IMR-90 (cell line): ENCODE measurements at regions of chr12 and their contacts with region 1.

Region 1: DNA sequence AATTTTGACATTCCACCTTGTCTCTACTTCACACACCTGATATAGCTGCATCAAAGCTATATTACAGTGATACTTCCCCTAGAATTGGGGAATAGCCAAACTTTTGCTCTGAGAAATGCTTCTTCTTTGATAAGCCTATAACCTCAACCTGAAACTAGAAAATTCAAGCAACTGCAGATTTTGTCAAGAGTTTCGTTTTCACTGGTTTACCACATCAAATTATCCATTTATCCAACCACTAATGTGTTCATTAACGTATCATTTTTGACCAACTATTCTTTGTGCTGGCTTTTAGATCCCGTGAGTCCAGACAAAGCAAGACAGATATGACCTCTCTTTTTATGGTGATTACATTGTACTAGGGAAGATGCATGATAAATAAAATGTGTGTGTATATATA is 13.5 kb upstream of the TAS2R46 start:
- DNase-seq: no peak
- ATAC-seq: no peak
- H3K4me3 ChIP-seq: no peak overlapping the region
- H3K27ac ChIP-seq: no peak overlapping the region
- H3K4me1 ChIP-seq: no peaks in the 10 kb centered on the region
- H3K27me3 ChIP-seq: no peaks in the 10 kb centered on the region
- CTCF ChIP-seq: no peak
- POLR2A ChIP-seq: no peak
- RAD21 ChIP-seq: no peak

Region 2: GRCh38 chr12:11015775-11016430 is 59.7 kb before region 1 on chr12:
- CTCF ChIA-PET with region 1: no interaction called
- POLR2A ChIA-PET with region 1: no interaction called
- dilution Hi-C with region 1: no loop called
- in situ Hi-C with region 1: no loop called
- intact Hi-C with region 1: loop called (anchors 1 kb)
- DNase-seq: no peak
- ATAC-seq: no peak
- H3K4me3 ChIP-seq: no peak overlapping the region
- H3K27ac ChIP-seq: no peak overlapping the region
- H3K4me1 ChIP-seq: no peaks in the 10 kb centered on the region; the same call in 1 of the 2 replicates
- H3K27me3 ChIP-seq: no peaks in the 10 kb centered on the region
- CTCF ChIP-seq: no peak
- POLR2A ChIP-seq: no peak
- RAD21 ChIP-seq: no peak

Region 3: DNA sequence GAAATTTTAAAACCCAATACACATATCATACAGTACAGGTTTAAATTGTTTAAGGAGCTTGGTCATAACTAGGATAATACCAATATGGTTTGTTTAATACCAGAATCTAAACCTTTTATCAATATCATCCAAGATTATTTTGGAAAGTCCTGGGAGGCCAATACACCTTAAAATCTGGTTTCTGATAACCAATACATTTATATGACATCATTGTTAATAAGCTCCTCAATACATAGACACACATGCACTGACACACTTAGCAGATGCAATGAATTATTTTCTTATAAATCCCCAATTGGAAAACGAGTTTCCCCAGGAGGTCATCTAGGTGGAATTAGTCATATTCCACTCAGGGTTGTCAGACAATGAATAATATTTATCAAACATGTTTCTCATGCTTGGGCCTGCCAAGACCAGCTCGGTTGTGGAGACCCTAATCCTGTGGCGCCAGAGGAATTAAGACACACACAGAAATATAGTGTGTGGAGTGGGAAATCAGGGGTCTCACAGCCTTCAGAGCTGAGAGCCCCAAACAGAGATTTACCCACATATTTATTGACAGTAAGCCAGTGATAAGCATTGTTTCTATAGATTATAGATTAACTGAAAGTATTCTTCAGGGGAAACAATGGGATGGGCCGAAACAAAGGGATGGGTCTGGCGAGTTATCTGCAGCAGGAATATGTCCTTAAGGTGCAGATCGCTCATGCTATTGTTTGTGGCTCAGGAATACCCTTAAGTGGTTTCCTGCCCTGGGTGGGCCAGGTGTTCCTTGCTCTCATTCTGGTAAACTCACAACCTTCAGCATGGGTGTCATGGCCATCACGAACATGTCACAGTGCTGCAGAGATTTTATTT is 25.7 kb before region 1 on chr12:
- CTCF ChIA-PET with region 1: no interaction called
- POLR2A ChIA-PET with region 1: no interaction called
- dilution Hi-C with region 1: no loop called
- in situ Hi-C with region 1: no loop called
- intact Hi-C with region 1: no loop called
- DNase-seq: no peak
- ATAC-seq: no peak
- H3K4me3 ChIP-seq: no peak overlapping the region
- H3K27ac ChIP-seq: no peak overlapping the region
- H3K4me1 ChIP-seq: no peaks in the 10 kb centered on the region
- H3K27me3 ChIP-seq: no peaks in the 10 kb centered on the region
- CTCF ChIP-seq: no peak
- POLR2A ChIP-seq: no peak
- RAD21 ChIP-seq: no peak

Region 4: DNA sequence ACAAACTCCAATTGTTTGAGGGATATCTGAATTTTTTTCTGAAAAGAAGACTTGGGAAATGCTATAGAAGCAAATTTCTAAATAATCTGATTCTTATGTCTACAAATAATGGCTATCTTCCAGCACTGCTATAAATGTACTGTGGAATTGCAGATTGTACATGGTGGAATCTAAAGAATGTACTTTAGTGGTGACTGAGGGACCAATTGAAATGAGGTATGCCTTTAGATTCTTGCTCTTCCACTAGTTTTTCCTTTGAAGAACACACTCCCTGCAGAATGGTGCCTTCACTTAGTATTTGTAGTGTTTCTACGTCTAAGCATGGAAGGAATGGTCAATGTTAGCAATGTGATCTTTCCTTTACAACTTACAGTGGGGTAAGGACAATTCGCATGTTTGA is 246.3 kb after region 1 on chr12:
- CTCF ChIA-PET with region 1: no interaction called
- POLR2A ChIA-PET with region 1: no interaction called
- dilution Hi-C with region 1: no loop called
- in situ Hi-C with region 1: no loop called
- intact Hi-C with region 1: no loop called
- DNase-seq: no peak
- ATAC-seq: no peak; the same call in 1 of the 2 replicates
- H3K4me3 ChIP-seq: no peak overlapping the region
- H3K27ac ChIP-seq: no peak overlapping the region
- H3K4me1 ChIP-seq: no peaks in the 10 kb centered on the region
- H3K27me3 ChIP-seq: no peaks in the 10 kb centered on the region
- CTCF ChIP-seq: no peak
- POLR2A ChIP-seq: no peak
- RAD21 ChIP-seq: no peak